Activated CD8-positive, alpha-beta T cell treated with anti-CD3 and anti-CD28 coated beads for 36 hours (primary cell): ENCODE measurements at regions of chr11 and their contacts with region 1.

Region 1: DNA sequence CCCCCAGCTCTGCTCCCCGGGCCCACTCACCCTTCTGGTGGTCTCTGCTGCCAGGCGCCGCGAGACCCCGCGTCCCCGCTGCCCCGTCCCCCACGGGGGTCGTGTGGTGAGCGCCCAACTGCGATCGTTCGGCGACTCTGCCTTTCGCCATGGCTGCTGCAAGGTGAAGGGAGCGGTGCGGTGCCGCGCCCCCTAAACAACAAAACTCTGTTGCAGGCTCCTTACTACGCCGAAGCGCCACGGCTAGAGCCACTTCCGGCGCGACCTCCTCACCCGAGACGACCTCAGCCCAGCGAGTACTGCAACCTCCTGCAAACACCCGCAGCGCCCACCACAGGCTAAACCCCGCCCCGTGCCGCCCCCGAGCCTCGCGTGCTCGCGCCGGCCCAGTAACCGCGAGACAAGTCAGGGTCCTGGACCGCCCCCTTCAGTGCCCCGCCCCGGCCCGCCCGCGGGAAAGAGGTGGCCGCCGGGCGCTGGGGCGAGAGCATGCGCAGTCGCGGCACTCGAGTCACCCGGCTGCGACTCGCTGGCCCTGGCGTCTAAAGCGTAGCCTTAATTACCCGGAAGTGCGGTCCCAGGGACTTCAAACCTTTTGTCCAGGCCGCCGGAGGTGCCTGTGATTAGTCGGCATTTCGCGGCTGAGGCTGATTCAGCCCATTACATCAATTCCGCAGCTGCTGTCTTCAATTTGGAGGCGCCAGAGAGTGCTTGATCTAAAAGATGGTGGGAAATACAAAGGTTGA is at the start of gene TMEM41B:
- DNase-seq: peak; percentile 99
- ATAC-seq: peak; percentile 94
- H3K4me3 Mint-ChIP-seq: peak within 1 kb of the TSS; percentile 97
- H3K27ac Mint-ChIP-seq: peak within 1 kb of the TSS; percentile 98
- H3K4me1 Mint-ChIP-seq: peaks cover 26% of the 10 kb centered on the region
- H3K27me3 Mint-ChIP-seq: peaks cover 8% of the 10 kb centered on the region
- CTCF ChIP-seq: no peak
- total RNA-seq, gene TMEM41B: 20.4 to 23.0 TPM

Region 2: GRCh38 chr11:9120664-9121485 is 193.6 kb before region 1 on chr11:
- CTCF ChIA-PET with region 1: no interaction called
- POLR2A ChIA-PET with region 1: no interaction called
- intact Hi-C with region 1: no loop called
- DNase-seq: no peak
- ATAC-seq: no peak
- H3K4me3 Mint-ChIP-seq: no peak overlapping the region
- H3K27ac Mint-ChIP-seq: no peak overlapping the region
- H3K4me1 Mint-ChIP-seq: peaks cover 5% of the 10 kb centered on the region
- H3K27me3 Mint-ChIP-seq: no peaks in the 10 kb centered on the region
- CTCF ChIP-seq: no peak

Region 3: DNA sequence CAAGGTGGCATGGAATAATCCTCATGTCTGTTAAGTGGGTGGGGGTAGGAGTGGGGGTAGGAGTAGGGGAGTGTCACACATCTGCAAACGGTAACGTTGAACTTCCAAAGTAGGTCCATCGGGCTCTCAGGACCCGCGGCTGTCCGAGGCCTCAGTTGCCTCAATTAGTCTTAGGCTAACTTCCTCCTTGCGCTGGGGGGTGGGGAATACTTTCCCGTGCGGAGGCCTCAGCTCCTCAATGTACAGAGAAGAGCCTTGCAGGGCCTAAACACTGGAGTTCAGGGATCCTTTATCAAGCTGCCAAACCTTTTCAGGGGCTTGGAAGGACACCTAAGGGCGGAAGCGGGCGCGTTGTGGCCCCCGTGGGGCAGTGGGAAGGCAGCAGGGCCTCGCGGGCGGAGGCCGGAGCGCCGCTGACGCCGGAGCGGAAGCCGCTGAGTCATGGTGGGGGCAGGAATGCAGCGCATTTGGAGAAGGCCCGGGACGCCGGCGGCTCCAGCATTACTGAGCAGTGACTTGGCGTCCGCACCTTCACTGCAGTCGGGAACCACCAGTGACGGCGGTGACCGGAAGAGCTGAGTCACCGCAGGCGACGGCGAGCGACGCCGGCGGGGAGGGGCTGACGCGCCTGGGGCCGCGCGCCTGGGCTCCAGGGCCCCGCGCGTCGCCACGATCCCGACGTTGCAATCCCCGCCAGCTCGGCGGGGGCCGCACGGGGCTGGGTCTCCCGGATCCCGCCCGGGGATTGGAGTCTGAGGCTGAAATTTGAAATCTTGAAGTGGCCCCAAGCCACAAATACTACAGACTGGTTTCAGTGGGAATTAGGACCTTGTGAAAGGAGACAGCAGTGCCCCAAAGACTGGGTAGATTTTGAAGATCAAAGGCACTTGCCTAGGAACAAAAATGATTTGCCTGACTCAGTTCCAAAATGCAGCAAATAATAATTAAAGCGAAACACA is 49.8 kb after region 1 on chr11:
- CTCF ChIA-PET with region 1: no interaction called
- POLR2A ChIA-PET with region 1: interaction called, 13 read pairs
- intact Hi-C with region 1: no loop called
- DNase-seq: peak; percentile 88
- ATAC-seq: peak; percentile 94
- H3K4me3 Mint-ChIP-seq: peak overlapping the region; percentile 73
- H3K27ac Mint-ChIP-seq: peak overlapping the region; percentile 88
- H3K4me1 Mint-ChIP-seq: peaks cover 28% of the 10 kb centered on the region
- H3K27me3 Mint-ChIP-seq: no peaks in the 10 kb centered on the region
- CTCF ChIP-seq: no peak